ENCODE measurements at regions of chr3 and their contacts with region 1.

Region 1: GRCh38 chr3:173395412-173396181 is 1.9 kb upstream of the NLGN1 start:
- DNase-seq: peak; percentile 92
- H3K4me3 ChIP-seq: peak overlapping the region; percentile 80 to 100 (median 96)
- H3K27ac ChIP-seq: peak overlapping the region; percentile 97
- H3K4me1 ChIP-seq: peaks cover 26% of the 10 kb centered on the region
- H3K27me3 ChIP-seq: no peaks in the 10 kb centered on the region
- CTCF ChIP-seq: no peak
- POLR2A ChIP-seq: peak; percentile 79

Region 2: GRCh38 chr3:172808969-172809546 is 586.5 kb before region 1 on chr3:
- CTCF ChIA-PET with region 1: interaction called, 3 read pairs
- POLR2A ChIA-PET with region 1: no interaction called
- dilution Hi-C with region 1: no loop called
- intact Hi-C with region 1: loop called (anchors 1 kb)
- DNase-seq: peak; percentile 63
- H3K4me3 ChIP-seq: no peak overlapping the region
- H3K27ac ChIP-seq: no peak overlapping the region
- H3K4me1 ChIP-seq: no peaks in the 10 kb centered on the region
- H3K27me3 ChIP-seq: no peaks in the 10 kb centered on the region
- CTCF ChIP-seq: peak in 1 of 2 donors; percentile 2
- POLR2A ChIP-seq: no peak

Region 3: GRCh38 chr3:172939651-172940293 is 455.8 kb before region 1 on chr3:
- CTCF ChIA-PET with region 1: no interaction called
- POLR2A ChIA-PET with region 1: no interaction called
- dilution Hi-C with region 1: no loop called
- intact Hi-C with region 1: loop called (anchors 1 kb)
- DNase-seq: peak; percentile 77
- H3K4me3 ChIP-seq: no peak overlapping the region
- H3K27ac ChIP-seq: peak overlapping the region; percentile 84
- H3K4me1 ChIP-seq: peaks cover 21% of the 10 kb centered on the region
- H3K27me3 ChIP-seq: no peaks in the 10 kb centered on the region
- CTCF ChIP-seq: no peak
- POLR2A ChIP-seq: no peak

Region 4: GRCh38 chr3:173411375-173411973 is 15.9 kb after region 1 on chr3:
- CTCF ChIA-PET with region 1: interaction called, 22 read pairs
- POLR2A ChIA-PET with region 1: no interaction called
- dilution Hi-C with region 1: no loop called
- intact Hi-C with region 1: no loop called
- DNase-seq: peak; percentile 80
- H3K4me3 ChIP-seq: no peak overlapping the region
- H3K27ac ChIP-seq: no peak overlapping the region
- H3K4me1 ChIP-seq: no peaks in the 10 kb centered on the region
- H3K27me3 ChIP-seq: no peaks in the 10 kb centered on the region
- CTCF ChIP-seq: peak; percentile 21 to 35
- POLR2A ChIP-seq: no peak

Region 5: GRCh38 chr3:173553635-173554280 is 158.2 kb after region 1 on chr3:
- CTCF ChIA-PET with region 1: interaction called, 15 read pairs
- POLR2A ChIA-PET with region 1: no interaction called
- dilution Hi-C with region 1: no loop called
- intact Hi-C with region 1: loop called (anchors 5 kb)
- DNase-seq: peak; percentile 58
- H3K4me3 ChIP-seq: no peak overlapping the region
- H3K27ac ChIP-seq: no peak overlapping the region
- H3K4me1 ChIP-seq: no peaks in the 10 kb centered on the region
- H3K27me3 ChIP-seq: no peaks in the 10 kb centered on the region
- CTCF ChIP-seq: peak; percentile 61 to 65
- POLR2A ChIP-seq: no peak

Region 6: DNA sequence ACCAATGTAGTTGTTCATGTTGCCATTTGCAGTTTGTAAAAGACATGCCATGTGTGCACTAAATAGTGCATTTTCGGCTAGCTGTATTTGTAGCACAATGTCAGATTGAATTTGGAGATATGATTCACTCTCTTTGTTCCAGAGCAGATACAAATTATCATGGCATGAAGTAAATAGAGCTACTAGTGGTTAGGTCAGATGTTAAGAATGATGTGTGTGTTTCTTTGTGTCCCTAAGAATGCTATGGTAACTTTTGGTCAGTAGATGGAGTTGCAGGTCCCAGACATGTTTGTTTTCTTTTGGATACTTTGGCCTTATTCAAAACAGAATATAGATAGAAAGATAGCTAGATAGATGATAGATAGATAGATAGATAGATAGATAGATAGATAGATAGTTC is 597.7 kb after region 1 on chr3:
- CTCF ChIA-PET with region 1: no interaction called
- POLR2A ChIA-PET with region 1: no interaction called
- dilution Hi-C with region 1: no loop called
- intact Hi-C with region 1: loop called (anchors 5 kb)
- DNase-seq: peak; percentile 74
- H3K4me3 ChIP-seq: no peak overlapping the region
- H3K27ac ChIP-seq: no peak overlapping the region
- H3K4me1 ChIP-seq: no peaks in the 10 kb centered on the region
- H3K27me3 ChIP-seq: no peaks in the 10 kb centered on the region
- CTCF ChIP-seq: peak; percentile 9 to 28
- POLR2A ChIP-seq: no peak

Region 7: GRCh38 chr3:174440741-174441587 is 1045.4 kb after region 1 on chr3:
- CTCF ChIA-PET with region 1: interaction called, 4 read pairs
- POLR2A ChIA-PET with region 1: no interaction called
- dilution Hi-C with region 1: no loop called
- intact Hi-C with region 1: loop called (anchors 2 kb)
- DNase-seq: peak; percentile 90
- H3K4me3 ChIP-seq: peak overlapping the region; percentile 74 to 91 (median 78)
- H3K27ac ChIP-seq: peak overlapping the region; percentile 90
- H3K4me1 ChIP-seq: peaks cover 21% of the 10 kb centered on the region
- H3K27me3 ChIP-seq: no peaks in the 10 kb centered on the region
- CTCF ChIP-seq: no peak
- POLR2A ChIP-seq: peak; percentile 39

Measured in endothelial cell of umbilical vein (primary cell).